T-cell (primary cell): ENCODE measurements at regions of chr16 and their contacts with region 1.

Region 1: DNA sequence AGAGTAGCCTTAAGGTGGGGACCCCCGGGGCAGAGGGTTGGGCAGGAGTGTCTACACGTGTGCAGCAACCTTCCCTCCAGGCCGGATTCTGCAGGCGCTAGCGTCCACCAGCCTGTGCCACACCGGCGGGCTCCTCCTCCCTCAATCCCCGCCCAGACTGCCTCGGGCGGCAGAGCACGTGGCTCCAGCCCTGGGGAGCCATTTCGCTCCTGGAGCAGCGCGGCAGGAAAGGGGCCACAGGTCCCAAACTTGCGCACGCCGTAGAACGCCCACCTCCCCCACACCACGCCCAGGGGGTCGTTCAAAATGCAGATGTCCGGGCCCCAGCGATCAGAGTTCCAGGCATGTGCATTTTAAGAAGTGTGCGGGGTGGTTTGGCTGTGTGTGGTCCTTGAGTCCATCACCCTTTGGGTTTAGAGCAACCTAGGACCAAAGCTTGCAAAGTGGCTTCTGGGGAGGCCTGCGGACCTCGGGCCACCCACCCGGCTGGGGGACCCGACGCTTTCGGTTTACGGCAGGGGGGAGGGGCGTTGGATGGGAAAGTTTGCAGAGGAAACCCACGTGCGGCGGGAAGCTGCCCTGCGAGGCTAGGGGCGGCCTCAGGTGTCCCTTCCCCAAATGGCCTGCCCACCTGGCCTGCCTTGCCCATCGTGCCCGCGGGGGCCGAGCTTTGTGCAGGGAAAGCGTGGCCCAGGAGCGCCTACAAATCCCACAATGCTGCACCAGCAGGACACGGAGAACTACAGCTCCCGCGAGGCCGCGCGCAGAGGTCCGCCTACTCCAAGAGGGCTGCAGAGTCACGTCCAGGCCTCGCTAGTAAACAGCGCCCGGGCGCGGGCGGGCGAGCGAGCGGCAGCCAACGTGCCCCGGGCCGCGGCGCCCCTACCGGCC is 1.4 kb downstream of the TFAP4 start:
- DNase-seq: peak; percentile 75 to 94 (median 86)
- ATAC-seq: peak; percentile 82 to 88 (median 84)
- H3K4me3 ChIP-seq: peak overlapping the region; percentile 80 to 96
- H3K4me3 Mint-ChIP-seq: peak overlapping the region; percentile 85 to 87 (median 86)
- H3K27ac ChIP-seq: peak overlapping the region; percentile 38
- H3K27ac Mint-ChIP-seq: peak overlapping the region; percentile 68 to 77
- H3K4me1 ChIP-seq: peaks cover 3 to 25% of the 10 kb centered on the region in 2 experiments
- H3K4me1 Mint-ChIP-seq: peaks cover 13 to 20% (median 19%) of the 10 kb centered on the region in 3 donors
- H3K27me3 ChIP-seq: no peaks in the 10 kb centered on the region
- H3K27me3 Mint-ChIP-seq: no peaks in the 10 kb centered on the region

Region 2: DNA sequence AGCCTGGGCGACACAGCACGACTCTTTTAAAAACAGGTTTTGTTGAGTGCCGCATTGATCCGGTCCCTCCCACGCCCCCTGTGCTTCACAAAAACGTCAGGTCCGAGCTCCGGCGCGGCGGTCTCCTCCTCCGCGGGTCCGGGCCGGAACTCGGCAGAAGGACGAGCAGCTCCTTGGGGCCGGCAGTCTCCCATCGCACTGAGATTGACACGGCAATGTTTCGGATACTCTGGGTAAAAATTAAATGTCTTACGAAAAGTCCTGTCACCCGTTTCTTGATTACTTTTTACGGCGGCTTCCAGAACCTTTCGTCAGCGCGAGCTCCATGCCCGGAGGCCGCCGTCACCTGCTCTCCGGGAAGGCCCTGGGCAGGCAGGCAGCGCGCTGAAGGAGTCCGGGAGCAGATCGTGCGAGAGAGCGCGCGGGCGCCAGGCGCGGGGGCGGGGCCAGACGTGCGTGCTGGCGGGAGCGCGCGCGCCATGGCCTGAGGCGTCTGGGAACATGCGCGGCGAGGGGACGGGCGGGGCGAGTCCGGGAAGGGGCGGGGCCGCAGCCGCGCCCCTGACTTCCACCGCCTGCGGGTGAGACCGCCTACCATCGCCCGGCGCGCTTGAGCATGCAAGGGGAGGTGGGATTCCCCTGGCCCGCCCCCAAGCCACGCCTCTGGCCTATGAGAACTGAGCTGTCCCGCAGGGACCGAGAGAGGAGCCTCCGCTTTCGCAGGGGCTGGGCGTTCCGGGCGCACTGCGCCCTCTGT is 17.8 kb before region 1 on chr16:
- CTCF ChIA-PET with region 1: interaction called, 3 to 28 read pairs
- POLR2A ChIA-PET with region 1: no interaction called
- DNase-seq: peak; percentile 96 to 100 (median 100)
- ATAC-seq: peak; percentile 95 to 98 (median 96)
- H3K4me3 ChIP-seq: peak overlapping the region; percentile 80 to 87
- H3K4me3 Mint-ChIP-seq: peak overlapping the region; percentile 90 to 93 (median 93)
- H3K27ac ChIP-seq: peak overlapping the region; percentile 90
- H3K27ac Mint-ChIP-seq: peak overlapping the region; percentile 94 to 96
- H3K4me1 ChIP-seq: peaks cover 0 to 15% of the 10 kb centered on the region in 2 experiments
- H3K4me1 Mint-ChIP-seq: peaks cover 8 to 13% (median 12%) of the 10 kb centered on the region in 3 donors
- H3K27me3 ChIP-seq: no peaks in the 10 kb centered on the region
- H3K27me3 Mint-ChIP-seq: no peaks in the 10 kb centered on the region